Naive thymus-derived CD8-positive, alpha-beta T cell (primary cell): ENCODE measurements at regions of chr16 and their contacts with region 1.

Region 1: GRCh38 chr16:2155091-2156021 is at the start of gene TRAF7:
- DNase-seq: peak; percentile 93 to 99 (median 98)
- ATAC-seq: peak; percentile 91 to 93
- H3K4me3 Mint-ChIP-seq: peak within 1 kb of the TSS; percentile 87 to 96 (median 94)
- H3K27ac Mint-ChIP-seq: peak within 1 kb of the TSS; percentile 67 to 98 (median 93)
- H3K4me1 Mint-ChIP-seq: peaks cover 22 to 71% (median 67%) of the 10 kb centered on the region in 4 donors
- H3K27me3 Mint-ChIP-seq: no peaks in the 10 kb centered on the region
- polyA plus RNA-seq, gene TRAF7: 3.5 to 8.8 (median 4.3) TPM

Region 2: GRCh38 chr16:1782352-1783091 is 372.8 kb before region 1 on chr16 and contains the starts of genes NUBP2 and SPSB3:
- POLR2A ChIA-PET with region 1: interaction called, 10 read pairs
- DNase-seq: peak; percentile 90 to 99 (median 97)
- ATAC-seq: peak; percentile 86 to 87
- H3K4me3 Mint-ChIP-seq: peak within 1 kb of the TSS; percentile 83 to 97 (median 93)
- H3K27ac Mint-ChIP-seq: peak within 1 kb of the TSS; percentile 82 to 99 (median 93)
- H3K4me1 Mint-ChIP-seq: peaks cover 8 to 52% (median 27%) of the 10 kb centered on the region in 4 donors
- H3K27me3 Mint-ChIP-seq: no peaks in the 10 kb centered on the region
- polyA plus RNA-seq, gene NUBP2: 87.2 to 90.6 (median 87.3) TPM
- polyA plus RNA-seq, gene SPSB3: 38.0 to 42.0 (median 40.8) TPM

Region 3: DNA sequence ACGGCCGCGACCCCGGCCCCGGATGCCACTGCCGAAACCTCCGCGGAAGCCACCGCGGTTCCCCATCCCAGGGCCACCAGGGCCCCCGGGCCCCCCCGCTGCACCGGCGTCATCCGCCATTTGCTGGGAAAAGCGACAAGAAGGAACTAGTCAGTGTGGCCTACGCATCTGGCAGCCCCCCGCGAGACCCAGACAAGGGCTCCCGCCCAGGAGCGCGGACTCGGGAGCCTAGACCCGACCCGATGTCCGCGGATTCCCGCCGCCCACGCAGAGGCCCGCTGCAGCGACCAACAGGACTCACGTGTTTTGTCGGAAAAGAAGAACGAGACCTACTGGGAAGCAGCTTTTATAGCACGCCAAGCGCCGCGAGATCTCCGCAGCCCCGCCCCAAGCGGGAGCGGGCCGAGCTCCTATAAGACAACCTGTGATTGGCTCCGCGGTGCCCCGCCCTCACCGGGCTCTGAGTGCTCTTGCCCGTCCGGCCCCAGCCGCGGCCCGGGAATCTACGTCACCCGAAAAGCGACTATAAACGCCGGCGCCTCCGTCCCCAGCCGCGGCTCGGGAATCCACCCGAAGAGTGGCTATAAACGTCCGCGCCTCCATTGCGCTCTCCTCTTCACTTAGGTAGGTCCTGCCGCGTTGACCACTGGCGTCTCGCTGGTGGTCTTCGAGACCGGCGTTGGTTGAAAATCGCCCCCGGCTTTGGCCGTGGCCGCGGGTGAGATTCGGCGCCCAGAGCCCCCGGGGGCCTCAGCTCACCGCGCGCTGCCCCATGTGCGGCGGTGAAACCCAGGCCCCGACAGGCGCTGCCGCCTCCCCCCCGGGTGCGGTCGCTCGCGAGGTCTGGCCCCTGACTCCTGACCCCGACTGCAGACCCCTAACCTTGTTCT is 190.6 kb before region 1 on chr16 and contains the start of gene RPS2:
- POLR2A ChIA-PET with region 1: interaction called, 48 read pairs
- DNase-seq: peak; percentile 95 to 100 (median 98)
- ATAC-seq: peak; percentile 88 to 93
- H3K4me3 Mint-ChIP-seq: peak within 1 kb of the TSS; percentile 89 to 97 (median 94)
- H3K27ac Mint-ChIP-seq: peak within 1 kb of the TSS; percentile 96 to 99 (median 97)
- H3K4me1 Mint-ChIP-seq: peaks cover 24 to 48% (median 48%) of the 10 kb centered on the region in 4 donors
- H3K27me3 Mint-ChIP-seq: no peaks in the 10 kb centered on the region
- polyA plus RNA-seq, gene RPS2: 6,506 to 7,644 (median 7,481) TPM

Region 4: DNA sequence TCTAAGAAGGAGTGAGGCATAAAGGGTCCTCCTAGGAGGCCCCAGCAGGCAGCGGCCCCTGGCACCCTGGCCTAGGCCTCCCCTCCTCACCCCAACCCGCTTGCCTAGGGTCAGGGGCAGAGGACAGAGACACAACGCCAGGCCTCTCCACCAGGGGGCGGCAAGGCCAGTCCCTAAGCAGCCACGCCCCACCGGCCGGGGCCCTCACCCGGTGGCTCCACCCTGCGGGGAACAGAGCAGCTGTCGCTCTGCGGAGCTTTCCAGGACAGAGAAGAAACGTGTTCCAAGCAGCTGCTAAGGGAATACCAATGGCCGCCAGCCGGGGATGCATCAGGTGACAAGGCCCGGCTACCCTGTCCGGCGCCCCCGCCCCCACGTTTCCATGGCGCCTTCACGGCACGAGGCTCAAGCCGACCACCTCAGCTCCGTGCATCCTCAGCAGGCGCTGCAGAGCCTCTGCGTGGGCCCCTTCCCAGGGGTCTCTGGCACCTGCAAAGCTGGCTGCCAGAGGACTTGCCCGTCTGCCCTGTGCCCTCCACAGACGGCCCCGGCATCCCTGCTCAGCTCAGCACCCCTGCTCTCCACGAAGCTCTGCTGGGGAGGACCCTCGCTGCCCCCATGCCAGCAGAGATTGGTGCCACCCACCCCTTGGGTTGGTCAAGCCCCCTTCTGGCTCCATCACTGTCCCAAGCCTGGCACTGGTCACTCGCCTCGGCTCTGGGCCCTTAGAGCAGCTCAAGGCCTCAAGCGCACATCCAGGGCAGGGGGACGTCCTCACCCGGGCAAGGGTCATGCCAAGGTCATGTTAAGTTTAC is 151.3 kb before region 1 on chr16:
- POLR2A ChIA-PET with region 1: interaction called, 18 read pairs
- DNase-seq: peak; percentile 68 to 89 (median 80)
- ATAC-seq: peak; percentile 90 to 93
- H3K4me3 Mint-ChIP-seq: no peak overlapping the region
- H3K27ac Mint-ChIP-seq: no peak overlapping the region
- H3K4me1 Mint-ChIP-seq: peaks cover 25 to 50% (median 42%) of the 10 kb centered on the region in 4 donors
- H3K27me3 Mint-ChIP-seq: no peaks in the 10 kb centered on the region

Region 5: GRCh38 chr16:2023098-2023925 is 132.0 kb before region 1 on chr16:
- POLR2A ChIA-PET with region 1: interaction called, 21 read pairs
- DNase-seq: peak; percentile 88 to 99 (median 94)
- ATAC-seq: peak; percentile 74 to 82
- H3K4me3 Mint-ChIP-seq: peak overlapping the region; percentile 60 to 84 (median 73)
- H3K27ac Mint-ChIP-seq: peak overlapping the region; percentile 58 to 94 (median 87)
- H3K4me1 Mint-ChIP-seq: peaks cover 10 to 36% (median 23%) of the 10 kb centered on the region in 4 donors
- H3K27me3 Mint-ChIP-seq: peaks cover 7 to 34% (median 13%) of the 10 kb centered on the region in 5 donors

Region 6: GRCh38 chr16:2180962-2181923 is 25.9 kb after region 1 on chr16:
- POLR2A ChIA-PET with region 1: no interaction called
- DNase-seq: no peak
- ATAC-seq: no peak
- H3K4me3 Mint-ChIP-seq: no peak overlapping the region
- H3K27ac Mint-ChIP-seq: no peak overlapping the region
- H3K4me1 Mint-ChIP-seq: peaks cover 0 to 6% (median under 1%) of the 10 kb centered on the region in 4 donors
- H3K27me3 Mint-ChIP-seq: peaks cover 0 to 1% (median 0%) of the 10 kb centered on the region in 5 donors

Region 7: DNA sequence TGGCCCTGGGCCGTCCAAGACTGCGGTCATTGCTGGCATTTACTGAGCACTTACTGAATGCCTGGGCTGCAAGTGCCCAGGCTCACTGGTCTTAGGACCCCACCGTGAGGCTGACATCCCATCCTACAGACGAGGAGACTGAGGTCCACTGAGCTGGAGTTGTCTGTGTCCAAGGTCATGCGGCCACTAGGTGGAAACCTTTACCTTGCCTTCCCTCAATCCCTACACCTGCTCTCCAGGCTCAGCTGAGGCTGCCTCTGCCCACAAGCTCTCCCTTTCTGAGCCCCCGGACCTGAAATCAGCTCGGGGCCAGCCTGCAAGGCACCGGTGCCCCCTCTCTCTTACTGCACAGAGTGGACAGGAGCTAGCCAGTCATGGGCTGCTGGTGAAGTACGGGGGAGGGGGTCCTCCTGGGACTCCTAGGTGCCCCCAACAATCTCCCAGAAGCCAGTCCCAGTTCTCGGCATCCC is 39.5 kb after region 1 on chr16:
- POLR2A ChIA-PET with region 1: interaction called, 10 read pairs
- DNase-seq: peak in 9 of 10 donors; percentile 35 to 80 (median 52)
- ATAC-seq: peak; percentile 79 to 82
- H3K4me3 Mint-ChIP-seq: peak overlapping the region in 9 of 10 donors; percentile 34 to 79 (median 59)
- H3K27ac Mint-ChIP-seq: peak overlapping the region in 3 of 10 donors; percentile 14 to 73 (median 20)
- H3K4me1 Mint-ChIP-seq: peaks cover 2 to 15% (median 7%) of the 10 kb centered on the region in 4 donors
- H3K27me3 Mint-ChIP-seq: peaks cover 6 to 27% (median 18%) of the 10 kb centered on the region in 5 donors

Region 8: GRCh38 chr16:2213817-2214720 is 58.7 kb after region 1 on chr16:
- POLR2A ChIA-PET with region 1: interaction called, 14 read pairs
- DNase-seq: no peak
- ATAC-seq: peak in 1 of 2 donors; percentile 19
- H3K4me3 Mint-ChIP-seq: peak overlapping the region; percentile 59 to 85 (median 74)
- H3K27ac Mint-ChIP-seq: peak overlapping the region in 6 of 10 donors; percentile 33 to 81 (median 40)
- H3K4me1 Mint-ChIP-seq: peaks cover 5 to 23% (median 14%) of the 10 kb centered on the region in 4 donors
- H3K27me3 Mint-ChIP-seq: no peaks in the 10 kb centered on the region